Mammary epithelial cell (primary cell): ENCODE measurements at regions of chr5 and their contacts with region 1.

Region 1: DNA sequence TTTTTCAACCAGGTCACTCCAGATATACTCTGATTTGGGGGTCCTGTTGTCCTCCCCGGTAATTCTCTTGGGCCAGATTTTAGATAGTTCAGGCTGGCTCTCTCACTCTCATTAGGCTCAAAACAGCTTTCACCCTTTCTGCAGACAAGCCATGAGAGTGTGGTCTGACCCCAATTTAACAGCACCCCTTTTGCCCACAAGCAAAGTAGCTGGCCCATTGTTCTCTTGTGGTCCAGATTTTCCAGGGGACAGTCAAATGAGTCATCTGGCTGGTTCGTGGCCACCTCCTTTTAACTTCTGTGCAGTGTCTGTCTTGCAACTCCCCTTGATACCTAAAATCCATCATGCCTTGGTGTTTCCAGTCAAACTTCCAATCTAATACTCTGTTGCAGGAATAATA is 16.5 kb downstream of the BHMT2 start:
- DNase-seq: no peak
- H3K4me3 ChIP-seq: no peak overlapping the region
- H3K27ac ChIP-seq: no peak overlapping the region
- H3K4me1 ChIP-seq: no peaks in the 10 kb centered on the region
- H3K27me3 ChIP-seq: no peaks in the 10 kb centered on the region
- CTCF ChIP-seq: no peak

Region 2: DNA sequence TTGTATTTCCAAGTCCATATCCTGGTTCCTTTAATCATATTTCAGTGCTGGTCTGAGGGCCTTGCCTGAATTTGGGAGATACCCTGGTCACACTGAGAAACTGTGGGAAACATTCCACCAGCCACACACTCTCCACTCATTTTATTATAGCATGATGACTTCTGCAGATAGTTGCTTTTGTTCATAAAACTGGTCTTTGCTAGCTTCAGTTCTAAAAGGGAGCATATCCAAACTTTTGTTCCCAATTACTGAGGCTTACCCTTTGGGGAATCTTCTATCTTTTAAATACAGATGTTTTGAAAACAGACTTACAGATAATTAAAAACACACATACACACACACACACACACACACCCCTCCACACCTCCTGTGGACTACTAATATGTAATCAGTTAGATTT is 37.7 kb before region 1 on chr5:
- CTCF ChIA-PET with region 1: no interaction called
- dilution Hi-C with region 1: loop called (anchors 5 kb)
- in situ Hi-C with region 1: no loop called
- intact Hi-C with region 1: no loop called
- DNase-seq: no peak
- H3K4me3 ChIP-seq: no peak overlapping the region
- H3K27ac ChIP-seq: no peak overlapping the region
- H3K4me1 ChIP-seq: no peaks in the 10 kb centered on the region
- H3K27me3 ChIP-seq: no peaks in the 10 kb centered on the region
- CTCF ChIP-seq: no peak

Region 3: GRCh38 chr5:79062436-79062835 is 23.7 kb before region 1 on chr5:
- CTCF ChIA-PET with region 1: no interaction called
- dilution Hi-C with region 1: no loop called
- in situ Hi-C with region 1: no loop called
- intact Hi-C with region 1: no loop called
- DNase-seq: peak; percentile 11
- H3K4me3 ChIP-seq: no peak overlapping the region
- H3K27ac ChIP-seq: no peak overlapping the region
- H3K4me1 ChIP-seq: no peaks in the 10 kb centered on the region
- H3K27me3 ChIP-seq: no peaks in the 10 kb centered on the region
- CTCF ChIP-seq: no peak

Region 4: GRCh38 chr5:79621042-79621441 is 534.9 kb after region 1 on chr5:
- CTCF ChIA-PET with region 1: no interaction called
- dilution Hi-C with region 1: no loop called
- in situ Hi-C with region 1: no loop called
- intact Hi-C with region 1: no loop called
- DNase-seq: peak; percentile 83
- H3K4me3 ChIP-seq: no peak overlapping the region
- H3K27ac ChIP-seq: peak overlapping the region; percentile 34
- H3K4me1 ChIP-seq: peaks cover 9% of the 10 kb centered on the region
- H3K27me3 ChIP-seq: no peaks in the 10 kb centered on the region
- CTCF ChIP-seq: no peak